CD8-positive, alpha-beta memory T cell (primary cell): ENCODE measurements at regions of chr19 and their contacts with region 1.

Region 1: DNA sequence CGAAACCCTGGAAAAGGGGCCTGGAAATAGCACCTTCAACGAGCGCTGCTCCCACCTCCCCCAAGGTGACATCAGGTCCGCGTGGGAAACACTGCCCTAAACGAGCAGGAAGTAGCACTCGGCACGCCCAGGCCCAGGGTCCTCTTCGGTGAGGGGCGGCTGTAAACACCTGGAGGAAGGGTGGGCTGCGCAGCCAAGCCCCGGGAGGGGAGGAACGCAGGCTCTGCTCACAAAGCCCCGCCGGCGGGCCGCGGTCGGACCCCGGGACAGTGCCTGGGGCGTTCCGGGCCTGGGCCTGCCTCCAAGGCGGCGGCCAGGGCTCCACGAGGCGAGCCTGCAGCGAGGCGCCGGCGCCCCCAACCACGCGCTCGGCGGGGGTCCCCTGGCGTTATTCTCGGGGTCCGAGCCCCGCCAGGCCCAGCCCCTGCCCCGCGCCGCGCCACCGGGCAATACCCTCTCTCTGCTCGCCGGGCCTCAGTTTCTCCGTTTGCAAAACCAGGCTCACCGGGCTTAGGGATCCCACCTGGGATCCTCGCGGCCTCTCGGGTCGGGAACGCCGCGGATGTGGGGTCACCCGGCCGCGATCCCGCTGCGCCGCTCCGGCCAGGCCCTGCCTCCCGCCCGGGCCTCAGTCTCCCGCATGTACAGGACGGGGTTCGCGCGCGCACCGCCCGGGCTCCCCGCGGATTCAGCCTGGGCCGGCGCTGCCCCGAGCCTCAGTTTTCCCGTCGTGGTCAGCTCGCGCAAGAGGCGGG is 630 bp downstream of the RNF126 start:
- DNase-seq: peak; percentile 63 to 86 (median 74)
- H3K4me3 ChIP-seq: peak overlapping the region; percentile 84
- H3K4me3 Mint-ChIP-seq: peak overlapping the region; percentile 98 to 99 (median 98)
- H3K27ac ChIP-seq: peak overlapping the region; percentile 91
- H3K27ac Mint-ChIP-seq: peak overlapping the region; percentile 96 to 100 (median 100)
- H3K4me1 ChIP-seq: peaks cover 46% of the 10 kb centered on the region
- H3K4me1 Mint-ChIP-seq: peaks cover 24 to 56% (median 30%) of the 10 kb centered on the region in 3 donors
- H3K27me3 ChIP-seq: no peaks in the 10 kb centered on the region
- H3K27me3 Mint-ChIP-seq: peaks cover 0 to 3% of the 10 kb centered on the region in 2 donors

Region 2: DNA sequence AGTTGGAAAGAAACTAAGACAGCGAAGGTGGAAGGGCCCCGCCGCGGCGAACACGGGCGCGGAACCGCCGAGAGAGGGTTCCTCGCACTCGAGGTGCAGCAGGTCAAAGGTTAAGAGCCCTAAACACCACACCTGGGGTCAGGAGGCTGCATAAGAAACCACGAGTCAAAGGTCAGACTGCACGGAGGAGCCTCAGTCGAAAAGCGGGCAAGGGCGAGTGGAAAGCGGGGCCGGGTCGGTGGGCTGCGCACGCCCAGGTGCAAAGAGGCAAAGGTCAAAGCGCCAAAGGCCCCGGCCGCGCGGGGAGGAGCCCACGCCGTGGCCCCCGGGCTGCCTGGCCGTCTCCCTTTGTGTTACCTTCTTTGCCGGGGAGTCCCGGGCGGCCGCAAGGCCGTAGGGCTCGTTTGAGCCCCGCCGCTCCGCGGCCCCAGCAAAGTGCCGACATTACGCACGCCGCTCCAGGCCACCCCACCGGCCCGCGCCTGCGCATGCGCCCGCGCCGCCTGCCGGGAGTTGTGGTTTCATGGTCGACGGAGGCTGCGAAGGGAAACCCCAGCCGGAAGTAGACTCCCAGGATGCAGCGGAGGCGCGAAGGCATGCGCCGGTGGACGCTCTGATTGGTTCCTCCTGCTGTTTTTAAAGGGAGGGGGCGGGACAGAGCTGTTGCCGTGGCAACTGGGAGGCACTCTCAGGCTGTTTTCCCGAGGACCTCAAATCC is 29.2 kb before region 1 on chr19 and contains the start of gene POLRMT:
- CTCF ChIA-PET with region 1: interaction called, 4 read pairs
- POLR2A ChIA-PET with region 1: interaction called, 20 read pairs
- DNase-seq: peak; percentile 91 to 97 (median 95)
- H3K4me3 ChIP-seq: peak within 1 kb of the TSS; percentile 61
- H3K4me3 Mint-ChIP-seq: peak within 1 kb of the TSS; percentile 94 to 96 (median 96)
- H3K27ac ChIP-seq: peak within 1 kb of the TSS; percentile 72
- H3K27ac Mint-ChIP-seq: peak within 1 kb of the TSS; percentile 93 to 99 (median 96)
- H3K4me1 ChIP-seq: peaks cover 19% of the 10 kb centered on the region
- H3K4me1 Mint-ChIP-seq: peaks cover 25 to 42% (median 28%) of the 10 kb centered on the region in 3 donors
- H3K27me3 ChIP-seq: no peaks in the 10 kb centered on the region
- H3K27me3 Mint-ChIP-seq: no peaks in the 10 kb centered on the region
- total RNA-seq, gene POLRMT: 75.2 to 77.3 TPM